Right ventricle myocardium inferior (tissue), 1 donor: ENCODE measurements at regions of chr20 and their contacts with region 1.

Region 1: GRCh38 chr20:1325173-1326030 is 3.5 kb downstream of the SDCBP2 start:
- DNase-seq: peak; percentile 99
- ATAC-seq: peak; percentile 95

Region 2: GRCh38 chr20:1392823-1393506 is 67.6 kb after region 1 on chr20 and contains the start of gene FKBP1A:
- intact Hi-C with region 1: loop called (anchors 2 kb)
- DNase-seq: peak; percentile 97
- ATAC-seq: peak; percentile 99
- total RNA-seq, gene FKBP1A: 143 TPM

Region 3: GRCh38 chr20:1466211-1467081 is 141.0 kb after region 1 on chr20 and contains the start of gene NSFL1C:
- intact Hi-C with region 1: loop called (anchors 5 kb)
- DNase-seq: peak; percentile 97
- ATAC-seq: peak; percentile 98
- total RNA-seq, gene NSFL1C: 51.6 TPM